MCF 10A (cell line): ENCODE measurements at regions of chr9 and their contacts with region 1.

Region 1: DNA sequence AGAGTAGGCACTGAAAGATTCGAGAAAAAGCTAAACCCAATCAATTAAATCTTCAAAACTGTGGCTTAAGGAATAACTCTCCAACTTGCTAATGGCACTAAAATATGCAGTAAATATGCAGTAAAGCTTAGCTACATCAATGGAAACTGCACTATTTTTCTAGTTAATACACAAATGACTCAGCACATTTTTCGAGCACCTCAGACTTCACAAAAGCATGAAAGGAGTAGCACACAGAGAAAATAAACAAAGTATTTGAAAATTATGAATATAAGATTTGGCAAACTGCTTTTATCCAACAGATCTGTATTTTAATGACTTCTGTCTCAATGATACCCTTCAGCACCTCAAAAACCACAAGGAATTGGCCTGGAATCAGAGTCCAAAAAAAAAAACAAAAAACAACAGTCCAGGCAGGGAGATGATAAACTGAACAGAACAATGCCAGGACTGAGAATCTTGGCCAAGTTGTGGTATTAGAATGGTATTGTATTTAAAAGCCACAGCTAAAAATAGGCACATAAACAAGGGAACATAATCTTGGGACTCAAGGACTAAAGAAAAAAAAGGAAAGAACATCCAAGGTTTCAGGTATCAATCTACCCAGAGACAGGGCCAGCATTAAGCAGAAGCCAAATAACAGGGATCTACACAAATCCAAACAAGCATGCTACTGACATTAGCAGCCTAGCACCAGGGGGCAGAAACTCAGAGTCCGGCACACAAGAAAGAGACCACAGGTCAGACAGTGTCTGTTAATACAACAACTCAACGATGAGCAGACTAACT is 21.4 kb downstream of the TMEM245 start:
- DNase-seq: peak; percentile 84
- H3K4me3 Mint-ChIP-seq: peak overlapping the region; percentile 7
- H3K27ac Mint-ChIP-seq: peak overlapping the region; percentile 84
- H3K4me1 Mint-ChIP-seq: peaks cover 50% of the 10 kb centered on the region
- H3K27me3 Mint-ChIP-seq: no peaks in the 10 kb centered on the region
- CTCF ChIP-seq: no peak

Region 2: GRCh38 chr9:108356806-108357205 is 741.6 kb before region 1 on chr9:
- CTCF ChIA-PET with region 1: no interaction called
- POLR2A ChIA-PET with region 1: no interaction called
- intact Hi-C with region 1: no loop called
- DNase-seq: no peak
- H3K4me3 Mint-ChIP-seq: no peak overlapping the region
- H3K27ac Mint-ChIP-seq: peak overlapping the region; percentile 43
- H3K4me1 Mint-ChIP-seq: no peaks in the 10 kb centered on the region
- H3K27me3 Mint-ChIP-seq: no peaks in the 10 kb centered on the region
- CTCF ChIP-seq: no peak

Region 3: GRCh38 chr9:109110326-109111021 is 12.1 kb after region 1 on chr9:
- CTCF ChIA-PET with region 1: interaction called, 4 read pairs
- POLR2A ChIA-PET with region 1: interaction called, 18 read pairs
- intact Hi-C with region 1: no loop called
- DNase-seq: peak; percentile 61
- H3K4me3 Mint-ChIP-seq: peak overlapping the region; percentile 59
- H3K27ac Mint-ChIP-seq: peak overlapping the region; percentile 95
- H3K4me1 Mint-ChIP-seq: peaks cover 54% of the 10 kb centered on the region
- H3K27me3 Mint-ChIP-seq: no peaks in the 10 kb centered on the region
- CTCF ChIP-seq: no peak